B cell (primary cell): ENCODE measurements at regions of chr9 and their contacts with region 1.

Region 1: DNA sequence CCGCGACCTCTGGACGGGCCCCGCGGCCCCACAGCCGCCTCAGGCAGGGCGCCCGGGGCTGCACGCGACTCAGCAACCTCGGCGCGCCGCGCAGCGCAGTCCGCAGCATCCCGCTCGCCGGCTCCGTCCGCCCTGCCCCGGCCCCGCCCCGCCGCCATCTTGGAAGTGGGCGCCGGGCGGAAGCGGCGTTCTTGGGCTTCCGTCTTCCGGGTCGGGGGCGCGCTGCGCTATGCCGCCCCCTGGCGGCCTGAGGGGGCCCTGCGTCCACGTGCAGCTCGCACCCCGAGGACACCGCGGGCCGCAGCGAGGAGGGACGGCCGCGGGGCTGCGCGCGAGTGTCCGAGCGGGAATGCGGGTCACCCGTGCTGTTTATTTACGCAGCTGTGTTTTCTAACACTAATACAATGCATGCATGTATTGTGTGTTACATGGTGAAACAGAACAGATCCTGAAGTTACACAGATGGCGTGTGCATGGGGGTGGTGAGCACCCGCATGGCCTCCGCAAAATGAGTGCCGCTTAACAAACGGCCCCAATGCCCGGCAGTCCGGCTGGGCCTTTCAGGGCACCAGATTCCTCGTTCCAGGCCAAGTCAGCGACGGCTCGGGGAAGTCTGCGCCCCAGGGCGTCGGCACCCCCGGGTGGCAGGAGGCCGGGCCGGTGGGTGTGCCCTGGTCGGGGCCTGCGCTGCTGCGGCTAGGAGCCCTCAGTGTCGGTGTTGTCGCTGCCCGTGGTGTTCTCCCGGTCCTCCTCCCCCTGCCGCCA is at the start of gene DNLZ:
- DNase-seq: peak; percentile 93
- ATAC-seq: peak; percentile 70
- H3K4me3 ChIP-seq: peak within 1 kb of the TSS; percentile 3 to 97 (median 71)
- H3K4me3 Mint-ChIP-seq: peak within 1 kb of the TSS; percentile 89
- H3K27ac ChIP-seq: peak within 1 kb of the TSS; percentile 40 to 53
- H3K27ac Mint-ChIP-seq: peak within 1 kb of the TSS; percentile 93
- H3K4me1 ChIP-seq: peaks cover 5 to 10% of the 10 kb centered on the region in 2 donors
- H3K4me1 Mint-ChIP-seq: peaks cover 10% of the 10 kb centered on the region
- H3K27me3 ChIP-seq: no peaks in the 10 kb centered on the region
- H3K27me3 Mint-ChIP-seq: no peaks in the 10 kb centered on the region
- CTCF ChIP-seq: peak; percentile 97
- total RNA-seq, gene DNLZ: 23.0 and 25.4 TPM in 2 replicates

Region 2: GRCh38 chr9:135907431-135908092 is 456.2 kb before region 1 on chr9 and contains the start of gene CAMSAP1:
- CTCF ChIA-PET with region 1: no interaction called
- POLR2A ChIA-PET with region 1: no interaction called
- intact Hi-C with region 1: loop called (anchors 5 kb)
- DNase-seq: peak; percentile 97
- ATAC-seq: peak; percentile 88
- H3K4me3 ChIP-seq: peak within 1 kb of the TSS; percentile 38 to 85 (median 84)
- H3K4me3 Mint-ChIP-seq: peak within 1 kb of the TSS; percentile 93
- H3K27ac ChIP-seq: peak within 1 kb of the TSS; percentile 44 to 74
- H3K27ac Mint-ChIP-seq: peak within 1 kb of the TSS; percentile 80
- H3K4me1 ChIP-seq: peaks cover 20 to 23% of the 10 kb centered on the region in 2 donors
- H3K4me1 Mint-ChIP-seq: peaks cover 43% of the 10 kb centered on the region
- H3K27me3 ChIP-seq: no peaks in the 10 kb centered on the region
- H3K27me3 Mint-ChIP-seq: no peaks in the 10 kb centered on the region
- CTCF ChIP-seq: no peak
- total RNA-seq, gene CAMSAP1: 31.0 and 31.6 TPM in 2 replicates

Region 3: GRCh38 chr9:136011703-136012521 is 351.9 kb before region 1 on chr9:
- CTCF ChIA-PET with region 1: no interaction called
- POLR2A ChIA-PET with region 1: no interaction called
- intact Hi-C with region 1: no loop called
- DNase-seq: no peak
- ATAC-seq: no peak
- H3K4me3 ChIP-seq: no peak overlapping the region
- H3K4me3 Mint-ChIP-seq: no peak overlapping the region
- H3K27ac ChIP-seq: no peak overlapping the region
- H3K27ac Mint-ChIP-seq: no peak overlapping the region
- H3K4me1 ChIP-seq: no peaks in the 10 kb centered on the region
- H3K4me1 Mint-ChIP-seq: no peaks in the 10 kb centered on the region
- H3K27me3 ChIP-seq: no peaks in the 10 kb centered on the region
- H3K27me3 Mint-ChIP-seq: no peaks in the 10 kb centered on the region
- CTCF ChIP-seq: no peak

Region 4: DNA sequence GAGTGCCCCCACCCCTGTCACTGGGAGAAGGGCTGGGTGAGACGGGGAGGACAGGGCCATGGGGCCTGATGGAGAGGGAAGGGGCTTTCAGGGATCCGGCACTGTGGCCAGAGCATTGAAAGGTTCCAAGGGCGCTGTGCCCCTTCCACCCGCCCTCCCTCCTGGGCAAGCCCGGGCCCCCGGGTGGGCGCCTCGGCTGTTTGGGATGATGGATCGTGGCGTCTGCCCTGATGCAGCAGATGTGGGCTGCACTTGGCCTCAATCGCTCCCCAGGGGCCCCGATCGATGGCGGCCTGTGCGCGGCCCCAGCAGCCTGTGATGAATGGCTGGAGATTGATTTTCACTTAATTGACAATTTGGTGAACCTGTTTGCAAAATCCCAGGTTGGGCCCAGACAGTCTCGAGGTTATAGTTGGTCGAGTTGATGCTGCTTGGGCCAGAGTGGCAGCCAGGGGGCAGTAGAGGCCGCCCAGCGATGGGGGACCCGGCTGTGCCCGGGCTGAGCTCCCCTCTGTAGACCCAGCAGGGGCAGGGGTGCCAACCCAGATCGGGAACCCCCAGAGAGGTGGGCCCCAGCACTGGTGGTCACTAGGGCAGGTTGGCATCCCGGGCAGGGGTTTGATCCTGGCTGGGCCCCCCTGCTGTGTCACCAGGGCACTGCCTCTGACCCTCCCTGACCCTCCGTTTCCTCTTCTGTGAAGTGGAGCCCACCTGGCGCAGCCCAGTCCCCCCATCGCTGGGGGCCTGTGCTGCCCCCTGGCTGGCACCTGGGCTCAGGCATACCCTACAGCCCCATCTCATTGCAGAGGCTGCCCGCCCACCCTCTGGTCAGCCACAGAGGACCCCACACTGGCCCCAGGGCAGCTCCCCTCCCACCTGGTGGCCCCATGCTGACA is 193.5 kb before region 1 on chr9:
- CTCF ChIA-PET with region 1: interaction called, 13 read pairs
- POLR2A ChIA-PET with region 1: no interaction called
- intact Hi-C with region 1: no loop called
- DNase-seq: peak; percentile 80
- ATAC-seq: peak; percentile 97
- H3K4me3 ChIP-seq: no peak overlapping the region
- H3K4me3 Mint-ChIP-seq: no peak overlapping the region
- H3K27ac ChIP-seq: no peak overlapping the region
- H3K27ac Mint-ChIP-seq: peak overlapping the region; percentile 68
- H3K4me1 ChIP-seq: peaks cover 0 to 15% of the 10 kb centered on the region in 2 donors
- H3K4me1 Mint-ChIP-seq: peaks cover 11% of the 10 kb centered on the region
- H3K27me3 ChIP-seq: peaks cover 0 to 35% (median 4%) of the 10 kb centered on the region in 4 experiments
- H3K27me3 Mint-ChIP-seq: peaks cover 21% of the 10 kb centered on the region
- CTCF ChIP-seq: peak; percentile 85

Region 5: GRCh38 chr9:136267261-136268111 is 96.3 kb before region 1 on chr9:
- CTCF ChIA-PET with region 1: no interaction called
- POLR2A ChIA-PET with region 1: no interaction called
- intact Hi-C with region 1: loop called (anchors 1 kb)
- DNase-seq: peak; percentile 90
- ATAC-seq: peak; percentile 98
- H3K4me3 ChIP-seq: peak overlapping the region in 4 of 5 experiments; percentile 55 to 69 (median 62)
- H3K4me3 Mint-ChIP-seq: peak overlapping the region; percentile 85
- H3K27ac ChIP-seq: peak overlapping the region; percentile 50 to 66
- H3K27ac Mint-ChIP-seq: peak overlapping the region; percentile 84
- H3K4me1 ChIP-seq: peaks cover 7 to 16% of the 10 kb centered on the region in 2 donors
- H3K4me1 Mint-ChIP-seq: peaks cover 11% of the 10 kb centered on the region
- H3K27me3 ChIP-seq: no peaks in the 10 kb centered on the region
- H3K27me3 Mint-ChIP-seq: peaks cover 3% of the 10 kb centered on the region
- CTCF ChIP-seq: peak; percentile 38

Region 6: DNA sequence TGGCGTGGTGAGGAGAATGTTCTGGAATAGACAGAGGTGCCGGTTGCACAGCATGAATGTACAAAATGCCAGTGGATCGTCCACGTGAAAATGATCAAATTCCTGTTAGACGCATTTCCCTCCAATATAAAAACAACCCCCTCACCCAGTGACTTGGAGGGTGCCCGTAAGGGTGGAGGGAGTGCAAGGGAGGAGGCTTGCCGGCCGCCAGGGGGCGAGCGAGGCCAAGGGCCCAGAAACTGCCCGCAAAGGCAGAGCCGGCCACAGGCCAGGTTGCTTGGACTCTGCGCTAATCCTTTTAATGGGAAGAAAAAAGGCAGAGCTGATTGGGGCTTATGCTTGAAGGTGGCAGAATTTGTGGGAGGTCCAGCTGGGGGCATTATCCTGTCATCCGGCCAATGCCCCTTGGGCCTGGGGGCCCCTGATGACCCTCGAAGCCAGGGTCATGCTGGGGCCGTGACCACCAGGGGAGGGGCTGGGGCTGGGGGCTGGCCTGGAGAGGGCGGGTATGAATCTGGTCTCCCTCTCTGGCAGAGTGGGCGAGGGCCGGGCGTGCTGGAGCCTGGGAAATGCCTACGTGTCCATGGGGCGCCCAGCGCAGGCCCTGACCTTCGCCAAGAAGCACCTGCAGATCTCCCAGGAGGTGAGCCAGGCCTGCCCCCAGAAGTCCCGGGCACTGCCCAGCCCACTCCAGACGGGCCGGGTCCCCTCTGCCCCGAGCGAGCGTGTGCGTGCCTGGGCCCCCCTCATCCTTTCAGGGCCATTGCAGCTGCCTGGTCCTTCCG is 24.4 kb before region 1 on chr9:
- CTCF ChIA-PET with region 1: interaction called, 4 read pairs
- POLR2A ChIA-PET with region 1: no interaction called
- intact Hi-C with region 1: loop called (anchors 1 kb)
- DNase-seq: peak; percentile 55
- ATAC-seq: peak; percentile 60
- H3K4me3 ChIP-seq: no peak overlapping the region
- H3K4me3 Mint-ChIP-seq: no peak overlapping the region
- H3K27ac ChIP-seq: no peak overlapping the region
- H3K27ac Mint-ChIP-seq: no peak overlapping the region
- H3K4me1 ChIP-seq: peaks cover 3 to 6% of the 10 kb centered on the region in 2 donors
- H3K4me1 Mint-ChIP-seq: peaks cover 9% of the 10 kb centered on the region
- H3K27me3 ChIP-seq: no peaks in the 10 kb centered on the region
- H3K27me3 Mint-ChIP-seq: no peaks in the 10 kb centered on the region
- CTCF ChIP-seq: peak; percentile 77

Region 7: DNA sequence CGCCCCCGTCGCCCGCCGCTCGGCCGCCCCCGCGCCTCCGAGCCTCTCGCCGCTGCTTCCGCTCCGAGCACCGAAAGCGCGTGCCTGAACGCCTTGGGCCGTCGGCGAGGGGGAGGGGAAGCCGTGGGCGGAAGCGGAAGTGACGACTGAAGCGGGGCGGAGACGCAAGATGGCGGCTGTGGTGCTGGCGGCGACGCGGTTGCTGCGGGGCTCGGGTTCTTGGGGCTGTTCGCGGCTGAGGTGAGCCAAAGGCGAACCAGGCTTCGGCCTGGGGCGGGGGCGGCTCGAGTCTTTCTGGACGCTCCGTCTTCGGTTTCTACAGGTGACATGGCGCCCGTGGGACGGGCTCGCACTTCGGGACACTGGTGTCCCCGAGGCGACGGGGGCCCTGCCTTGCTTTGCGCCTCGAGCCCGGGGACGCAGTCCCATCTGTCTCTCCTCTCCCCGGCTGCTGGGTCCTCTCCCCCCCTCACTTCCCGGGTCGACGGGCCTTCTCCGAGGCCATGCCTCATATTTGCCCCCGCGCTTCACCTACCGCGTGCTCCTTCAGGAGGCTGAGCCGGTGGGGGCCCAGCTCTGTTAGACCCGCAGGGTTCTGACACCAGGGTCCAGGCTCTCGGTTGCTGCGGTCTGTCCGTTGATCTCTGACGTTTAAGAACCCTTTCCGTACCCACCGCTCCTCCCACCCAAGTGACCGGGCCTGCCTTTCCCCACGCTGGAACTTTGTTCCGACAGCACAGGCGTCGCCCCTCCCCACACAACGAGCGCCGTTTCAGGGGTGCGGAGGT is 46.9 kb after region 1 on chr9 and contains the starts of genes ENTR1 and PMPCA:
- CTCF ChIA-PET with region 1: interaction called, 5 read pairs
- POLR2A ChIA-PET with region 1: interaction called, 4 read pairs
- intact Hi-C with region 1: loop called (anchors 1 kb)
- DNase-seq: peak; percentile 95
- ATAC-seq: peak; percentile 88
- H3K4me3 ChIP-seq: peak within 1 kb of the TSS; percentile 46 to 96 (median 81)
- H3K4me3 Mint-ChIP-seq: peak within 1 kb of the TSS; percentile 92
- H3K27ac ChIP-seq: peak within 1 kb of the TSS; percentile 80 to 91
- H3K27ac Mint-ChIP-seq: peak within 1 kb of the TSS; percentile 92
- H3K4me1 ChIP-seq: peaks cover 25 to 34% of the 10 kb centered on the region in 2 donors
- H3K4me1 Mint-ChIP-seq: peaks cover 37% of the 10 kb centered on the region
- H3K27me3 ChIP-seq: no peaks in the 10 kb centered on the region
- H3K27me3 Mint-ChIP-seq: no peaks in the 10 kb centered on the region
- CTCF ChIP-seq: no peak
- total RNA-seq, gene ENTR1: 86.3 and 94.7 TPM in 2 replicates
- total RNA-seq, gene PMPCA: 64.6 and 72.2 TPM in 2 replicates